Endothelial cell of umbilical vein (primary cell): ENCODE measurements at regions of chr6 and their contacts with region 1.

Region 1: GRCh38 chr6:125790358-125791150 is at the start of gene NCOA7:
- DNase-seq: peak; percentile 84
- H3K4me3 ChIP-seq: peak within 1 kb of the TSS; percentile 87 to 96 (median 87)
- H3K27ac ChIP-seq: peak within 1 kb of the TSS; percentile 81
- H3K4me1 ChIP-seq: peaks cover 42% of the 10 kb centered on the region
- H3K27me3 ChIP-seq: no peaks in the 10 kb centered on the region
- CTCF ChIP-seq: no peak
- POLR2A ChIP-seq: peak; percentile 83
- total RNA-seq, gene NCOA7: 58.2 and 71.2 TPM in 2 replicates

Region 2: GRCh38 chr6:125658759-125659431 is 131.7 kb before region 1 on chr6:
- CTCF ChIA-PET with region 1: no interaction called
- POLR2A ChIA-PET with region 1: no interaction called
- dilution Hi-C with region 1: no loop called
- intact Hi-C with region 1: no loop called
- DNase-seq: no peak
- H3K4me3 ChIP-seq: no peak overlapping the region
- H3K27ac ChIP-seq: no peak overlapping the region
- H3K4me1 ChIP-seq: no peaks in the 10 kb centered on the region
- H3K27me3 ChIP-seq: peaks cover 0 to 1% of the 10 kb centered on the region in 2 experiments
- CTCF ChIP-seq: no peak
- POLR2A ChIP-seq: no peak

Region 3: GRCh38 chr6:125688138-125688537 is 102.4 kb before region 1 on chr6:
- CTCF ChIA-PET with region 1: no interaction called
- POLR2A ChIA-PET with region 1: no interaction called
- dilution Hi-C with region 1: no loop called
- intact Hi-C with region 1: no loop called
- DNase-seq: no peak
- H3K4me3 ChIP-seq: no peak overlapping the region
- H3K27ac ChIP-seq: no peak overlapping the region
- H3K4me1 ChIP-seq: no peaks in the 10 kb centered on the region
- H3K27me3 ChIP-seq: peaks cover 2 to 3% of the 10 kb centered on the region in 2 experiments
- CTCF ChIP-seq: no peak
- POLR2A ChIP-seq: no peak

Region 4: GRCh38 chr6:125700581-125701353 is 89.8 kb before region 1 on chr6:
- CTCF ChIA-PET with region 1: no interaction called
- POLR2A ChIA-PET with region 1: no interaction called
- dilution Hi-C with region 1: no loop called
- intact Hi-C with region 1: no loop called
- DNase-seq: no peak
- H3K4me3 ChIP-seq: no peak overlapping the region
- H3K27ac ChIP-seq: no peak overlapping the region
- H3K4me1 ChIP-seq: no peaks in the 10 kb centered on the region
- H3K27me3 ChIP-seq: peaks cover 2 to 3% of the 10 kb centered on the region in 2 experiments
- CTCF ChIP-seq: no peak
- POLR2A ChIP-seq: no peak

Region 5: GRCh38 chr6:125802943-125803377 is 12.4 kb after region 1 on chr6:
- CTCF ChIA-PET with region 1: interaction called, 47 read pairs
- POLR2A ChIA-PET with region 1: no interaction called
- dilution Hi-C with region 1: no loop called
- intact Hi-C with region 1: loop called (anchors 1 kb)
- DNase-seq: peak; percentile 96
- H3K4me3 ChIP-seq: peak overlapping the region in 1 of 3 experiments; percentile 20
- H3K27ac ChIP-seq: peak overlapping the region; percentile 95
- H3K4me1 ChIP-seq: peaks cover 33% of the 10 kb centered on the region
- H3K27me3 ChIP-seq: no peaks in the 10 kb centered on the region
- CTCF ChIP-seq: no peak
- POLR2A ChIP-seq: no peak

Region 6: DNA sequence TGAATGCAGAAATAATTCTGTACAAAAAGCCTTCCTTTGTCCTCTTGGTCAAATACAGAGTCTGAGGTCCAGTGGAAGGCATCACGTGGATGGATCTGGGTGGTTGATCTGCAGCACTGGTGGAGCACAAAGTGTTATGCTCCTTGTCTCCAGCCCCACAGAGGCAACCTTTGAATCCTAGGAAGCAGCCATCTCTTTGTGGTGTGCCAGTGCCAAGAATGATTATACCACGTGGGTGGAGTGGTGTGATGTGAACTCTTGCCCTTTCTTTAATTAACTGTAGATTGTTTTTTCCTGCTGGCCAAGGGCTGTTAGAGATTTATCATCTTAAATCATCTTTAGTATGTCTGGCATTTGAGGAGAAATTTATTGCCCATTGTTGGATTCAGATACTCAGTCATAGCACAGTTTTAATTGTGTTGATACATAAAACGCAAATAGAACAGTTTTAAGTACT is 31.3 kb after region 1 on chr6:
- CTCF ChIA-PET with region 1: interaction called, 6 read pairs
- POLR2A ChIA-PET with region 1: no interaction called
- dilution Hi-C with region 1: no loop called
- intact Hi-C with region 1: loop called (anchors 1 kb)
- DNase-seq: peak; percentile 99
- H3K4me3 ChIP-seq: no peak overlapping the region
- H3K27ac ChIP-seq: peak overlapping the region; percentile 81
- H3K4me1 ChIP-seq: peaks cover 49% of the 10 kb centered on the region
- H3K27me3 ChIP-seq: no peaks in the 10 kb centered on the region
- CTCF ChIP-seq: no peak
- POLR2A ChIP-seq: peak; percentile 61

Region 7: DNA sequence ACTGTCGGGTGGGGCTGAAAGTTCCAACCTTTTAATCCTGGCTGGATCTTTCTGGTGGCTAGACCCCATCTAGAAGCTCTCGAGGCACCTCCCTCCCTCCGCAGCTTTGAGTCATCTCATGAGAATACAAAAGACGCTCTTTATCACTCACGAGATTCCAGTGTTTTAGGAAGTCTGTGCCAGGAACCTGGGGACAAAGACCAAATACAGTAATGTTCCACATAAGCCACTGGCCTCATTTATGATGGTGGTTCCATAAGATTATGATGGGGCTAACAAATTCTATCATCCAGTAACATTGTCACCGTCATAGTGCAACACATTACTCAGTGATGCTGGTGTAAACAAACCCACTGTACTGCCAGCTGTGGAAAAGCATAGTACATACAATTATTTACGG is 48.9 kb after region 1 on chr6:
- CTCF ChIA-PET with region 1: interaction called, 40 read pairs
- POLR2A ChIA-PET with region 1: interaction called, 3 read pairs
- dilution Hi-C with region 1: no loop called
- intact Hi-C with region 1: loop called (anchors 5 kb)
- DNase-seq: peak; percentile 79
- H3K4me3 ChIP-seq: no peak overlapping the region
- H3K27ac ChIP-seq: peak overlapping the region; percentile 65
- H3K4me1 ChIP-seq: peaks cover 33% of the 10 kb centered on the region
- H3K27me3 ChIP-seq: no peaks in the 10 kb centered on the region
- CTCF ChIP-seq: no peak
- POLR2A ChIP-seq: no peak

Region 8: DNA sequence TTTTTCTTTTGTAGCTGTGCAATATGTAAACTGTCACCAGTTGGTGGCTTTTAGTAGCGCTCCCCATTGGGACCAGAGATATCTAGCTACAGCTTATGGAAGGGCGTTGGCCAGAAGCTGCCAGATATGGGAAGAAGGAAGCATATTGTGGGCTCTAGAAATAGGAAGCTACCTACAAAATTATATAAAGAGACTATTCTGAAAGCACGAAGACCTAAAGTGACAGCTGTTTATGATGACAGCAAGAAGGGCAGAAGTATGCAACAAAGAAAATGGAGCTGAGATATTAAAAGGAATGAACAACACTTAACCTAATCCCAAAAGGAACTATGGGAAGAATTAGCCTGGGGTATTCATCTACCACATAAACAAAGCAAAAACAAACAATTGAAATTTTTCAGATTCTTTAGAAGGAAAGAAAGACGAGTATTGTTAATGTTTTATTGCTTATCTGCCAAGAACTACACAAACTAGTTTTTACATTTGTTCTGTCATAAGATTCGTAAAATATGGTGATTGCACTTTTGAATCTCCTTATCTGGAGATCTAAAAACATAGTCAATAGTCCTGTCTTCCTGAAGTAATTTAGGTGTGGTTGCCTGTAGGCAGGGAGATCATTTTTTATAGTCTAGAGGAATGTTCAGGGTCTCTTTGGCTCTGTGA is 81.8 kb after region 1 on chr6:
- CTCF ChIA-PET with region 1: interaction called, 13 read pairs
- POLR2A ChIA-PET with region 1: no interaction called
- dilution Hi-C with region 1: no loop called
- intact Hi-C with region 1: no loop called
- DNase-seq: no peak
- H3K4me3 ChIP-seq: no peak overlapping the region
- H3K27ac ChIP-seq: no peak overlapping the region
- H3K4me1 ChIP-seq: peaks cover 5% of the 10 kb centered on the region
- H3K27me3 ChIP-seq: no peaks in the 10 kb centered on the region
- CTCF ChIP-seq: no peak
- POLR2A ChIP-seq: no peak

Region 9: DNA sequence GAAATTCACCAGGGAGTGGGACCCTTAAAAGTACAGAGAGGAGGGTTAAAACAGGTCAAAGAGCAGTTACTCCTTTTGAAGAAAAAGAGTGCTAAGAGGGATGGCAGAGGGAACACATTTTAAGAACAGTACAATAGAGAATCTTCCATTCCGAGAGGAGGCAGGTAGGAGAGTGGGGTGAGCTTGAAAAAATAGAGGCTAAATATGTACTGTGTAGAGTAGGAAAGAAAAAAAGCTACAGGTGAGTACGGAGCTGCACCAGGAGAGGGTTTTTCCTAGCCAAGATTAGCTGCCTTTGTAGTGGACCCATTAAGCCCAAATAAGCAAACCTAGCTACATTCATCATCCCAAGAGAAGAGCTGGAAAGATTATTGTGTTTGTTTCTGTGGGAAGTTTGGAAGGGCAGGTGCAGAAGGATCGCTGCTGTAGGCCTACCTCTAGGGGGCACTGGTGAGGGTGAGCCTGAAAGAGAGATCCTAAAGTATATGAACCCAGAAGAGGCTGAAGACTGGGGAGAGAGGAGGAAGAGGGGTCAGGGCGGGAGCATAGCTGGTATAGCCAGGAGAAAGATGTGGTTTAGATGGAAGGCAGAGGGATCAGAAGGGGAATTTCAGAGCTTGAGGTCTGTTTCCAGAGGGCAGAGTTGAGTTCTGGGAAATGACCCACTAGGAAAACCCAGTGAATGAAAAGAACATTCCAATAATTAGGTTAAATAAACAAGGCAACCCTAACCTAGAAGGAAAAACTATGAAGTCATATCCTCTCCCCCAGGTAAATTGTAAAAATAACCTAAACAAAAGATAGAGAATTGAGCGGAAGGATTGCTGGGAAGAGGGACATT is 115.8 kb after region 1 on chr6:
- CTCF ChIA-PET with region 1: interaction called, 14 read pairs
- POLR2A ChIA-PET with region 1: no interaction called
- dilution Hi-C with region 1: no loop called
- intact Hi-C with region 1: loop called (anchors 5 kb)
- DNase-seq: peak; percentile 65
- H3K4me3 ChIP-seq: no peak overlapping the region
- H3K27ac ChIP-seq: no peak overlapping the region
- H3K4me1 ChIP-seq: peaks cover 26% of the 10 kb centered on the region
- H3K27me3 ChIP-seq: no peaks in the 10 kb centered on the region
- CTCF ChIP-seq: peak; percentile 80 to 83
- POLR2A ChIP-seq: no peak

Region 10: DNA sequence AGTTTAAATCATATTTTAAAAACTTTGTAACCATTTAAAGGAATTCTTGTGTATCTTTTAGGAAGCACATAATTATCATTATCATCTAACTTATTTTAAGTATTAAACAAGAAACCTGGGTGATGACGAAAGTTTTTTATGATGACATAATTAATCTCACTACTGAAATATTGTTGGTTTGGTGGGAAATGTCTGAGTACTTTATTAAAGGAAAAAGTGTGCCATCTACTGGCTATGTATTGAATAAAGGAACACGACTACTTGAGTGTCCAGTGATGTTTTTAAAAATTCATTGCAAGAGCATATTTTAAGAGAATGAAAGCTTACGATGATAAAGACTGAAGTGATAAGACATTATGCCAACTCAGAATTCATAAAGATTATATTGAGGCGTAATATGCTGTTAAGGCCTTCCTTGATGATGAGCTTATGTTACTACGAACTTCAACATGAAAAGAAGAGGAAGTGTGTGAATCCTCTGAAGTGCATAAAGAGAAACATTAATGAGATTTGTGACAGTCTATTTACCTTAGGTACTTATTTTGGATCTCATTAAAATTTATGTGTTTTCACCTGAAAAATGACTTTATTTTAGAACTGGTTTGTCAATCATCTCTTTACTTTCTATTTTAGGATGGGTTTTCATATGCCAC is 183.8 kb after region 1 on chr6:
- CTCF ChIA-PET with region 1: interaction called, 76 read pairs
- POLR2A ChIA-PET with region 1: interaction called, 3 read pairs
- dilution Hi-C with region 1: no loop called
- intact Hi-C with region 1: loop called (anchors 1 kb)
- DNase-seq: peak; percentile 73
- H3K4me3 ChIP-seq: no peak overlapping the region
- H3K27ac ChIP-seq: no peak overlapping the region
- H3K4me1 ChIP-seq: no peaks in the 10 kb centered on the region
- H3K27me3 ChIP-seq: no peaks in the 10 kb centered on the region
- CTCF ChIP-seq: peak; percentile 19 to 33
- POLR2A ChIP-seq: no peak